Panc1 (cell line): ENCODE measurements at regions of chr3 and their contacts with region 1.

Region 1: GRCh38 chr3:47324278-47324865 is 41.6 kb downstream of the KLHL18 start:
- DNase-seq: peak; percentile 42
- ATAC-seq: peak; percentile 87
- H3K4me3 ChIP-seq: no peak overlapping the region
- H3K27ac ChIP-seq: no peak overlapping the region
- H3K4me1 ChIP-seq: no peaks in the 10 kb centered on the region
- H3K27me3 ChIP-seq: no peaks in the 10 kb centered on the region
- CTCF ChIP-seq: peak; percentile 73

Region 2: DNA sequence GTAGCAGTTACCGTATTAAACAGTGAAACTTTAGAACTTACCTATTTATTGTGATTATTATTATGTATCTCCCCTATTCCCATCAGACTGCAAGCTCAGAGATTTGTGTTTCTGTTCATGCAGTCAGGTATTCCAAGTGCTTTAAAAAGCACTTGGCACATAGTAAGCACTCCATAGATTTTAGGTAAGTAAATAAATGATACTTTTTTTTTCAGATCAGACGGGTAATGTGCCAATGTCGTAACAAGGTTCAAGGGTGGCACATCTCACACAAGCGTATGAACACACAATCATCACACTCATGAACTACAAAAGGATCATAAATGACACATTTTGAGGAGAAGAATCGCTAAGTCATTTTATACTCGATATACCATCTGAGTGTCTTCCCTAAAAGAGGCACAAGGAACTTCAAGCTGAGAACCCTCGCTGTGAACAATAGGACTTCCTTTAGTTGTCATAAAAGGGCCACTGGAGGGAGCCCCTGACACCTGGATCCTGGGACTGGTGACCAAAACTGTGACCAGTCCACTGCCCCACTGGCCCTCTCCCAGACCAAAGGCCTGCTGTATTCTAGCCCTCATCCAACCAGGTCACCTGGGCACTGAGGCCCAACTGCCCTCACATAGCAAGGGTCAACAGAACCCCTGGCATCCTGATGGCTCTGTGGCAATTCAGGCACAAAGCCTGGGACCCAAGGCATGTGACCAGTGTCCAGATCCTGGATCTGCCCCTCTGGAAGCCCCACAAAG is 73.9 kb before region 1 on chr3:
- CTCF ChIA-PET with region 1: interaction called, 5 read pairs
- POLR2A ChIA-PET with region 1: no interaction called
- in situ Hi-C with region 1: no loop called
- intact Hi-C with region 1: loop called (anchors 2 kb)
- DNase-seq: no peak
- ATAC-seq: peak; percentile 79
- H3K4me3 ChIP-seq: no peak overlapping the region
- H3K27ac ChIP-seq: no peak overlapping the region
- H3K4me1 ChIP-seq: no peaks in the 10 kb centered on the region
- H3K27me3 ChIP-seq: no peaks in the 10 kb centered on the region
- CTCF ChIP-seq: peak; percentile 67; the same call in 1 of the 2 replicates